Endothelial cell of umbilical vein (primary cell): ENCODE measurements at regions of chr6 and their contacts with region 1.

Region 1: DNA sequence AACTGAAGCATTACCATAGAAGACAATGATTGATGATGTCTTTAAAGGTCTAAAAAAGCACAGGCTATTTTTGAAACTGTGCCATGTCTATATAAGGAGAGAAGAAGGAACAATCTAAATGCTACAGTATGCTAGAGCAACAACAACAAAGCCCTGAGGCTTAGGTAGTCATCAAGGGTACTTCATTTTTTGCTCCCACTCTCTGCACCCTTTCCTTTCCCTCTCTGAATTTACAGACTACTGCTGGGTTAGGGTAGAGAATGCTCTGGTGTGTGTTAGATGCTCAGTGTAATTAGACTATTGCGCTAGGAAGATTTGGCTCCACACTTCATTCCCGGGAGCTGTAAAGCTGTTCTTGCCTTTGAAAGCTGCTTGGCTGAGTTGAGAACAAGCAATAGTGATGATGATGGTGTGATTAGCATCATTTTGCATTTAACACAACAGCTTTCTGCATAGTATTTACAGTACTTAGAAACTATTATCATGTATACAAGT is 1262.5 kb upstream of the CITED2 start:
- DNase-seq: no peak
- H3K4me3 ChIP-seq: no peak overlapping the region
- H3K27ac ChIP-seq: no peak overlapping the region
- H3K4me1 ChIP-seq: no peaks in the 10 kb centered on the region
- H3K27me3 ChIP-seq: no peaks in the 10 kb centered on the region
- CTCF ChIP-seq: no peak
- POLR2A ChIP-seq: no peak

Region 2: GRCh38 chr6:140225701-140226436 is 411.1 kb before region 1 on chr6:
- CTCF ChIA-PET with region 1: no interaction called
- POLR2A ChIA-PET with region 1: no interaction called
- dilution Hi-C with region 1: no loop called
- intact Hi-C with region 1: no loop called
- DNase-seq: peak; percentile 81
- H3K4me3 ChIP-seq: no peak overlapping the region
- H3K27ac ChIP-seq: peak overlapping the region; percentile 45
- H3K4me1 ChIP-seq: peaks cover 15% of the 10 kb centered on the region
- H3K27me3 ChIP-seq: no peaks in the 10 kb centered on the region
- CTCF ChIP-seq: no peak
- POLR2A ChIP-seq: no peak

Region 3: GRCh38 chr6:140718021-140718420 is 81.1 kb after region 1 on chr6:
- CTCF ChIA-PET with region 1: no interaction called
- POLR2A ChIA-PET with region 1: no interaction called
- dilution Hi-C with region 1: no loop called
- intact Hi-C with region 1: loop called (anchors 1 kb)
- DNase-seq: no peak
- H3K4me3 ChIP-seq: no peak overlapping the region
- H3K27ac ChIP-seq: no peak overlapping the region
- H3K4me1 ChIP-seq: no peaks in the 10 kb centered on the region
- H3K27me3 ChIP-seq: no peaks in the 10 kb centered on the region
- CTCF ChIP-seq: no peak
- POLR2A ChIP-seq: no peak

Region 4: GRCh38 chr6:140729521-140729920 is 92.6 kb after region 1 on chr6:
- CTCF ChIA-PET with region 1: no interaction called
- POLR2A ChIA-PET with region 1: no interaction called
- dilution Hi-C with region 1: no loop called
- intact Hi-C with region 1: no loop called
- DNase-seq: no peak
- H3K4me3 ChIP-seq: no peak overlapping the region
- H3K27ac ChIP-seq: no peak overlapping the region
- H3K4me1 ChIP-seq: no peaks in the 10 kb centered on the region
- H3K27me3 ChIP-seq: no peaks in the 10 kb centered on the region
- CTCF ChIP-seq: no peak
- POLR2A ChIP-seq: no peak